ENCODE measurements at regions of chr10 and their contacts with region 1.

Region 1: GRCh38 chr10:97210543-97210961 is 24.8 kb upstream of the SLIT1 start:
- DNase-seq: peak; percentile 48 to 72 (median 53)
- H3K4me3 ChIP-seq: no peak overlapping the region
- H3K4me3 Mint-ChIP-seq: no peak overlapping the region
- H3K27ac ChIP-seq: no peak overlapping the region
- H3K27ac Mint-ChIP-seq: no peak overlapping the region
- H3K4me1 ChIP-seq: no peaks in the 10 kb centered on the region
- H3K4me1 Mint-ChIP-seq: no peaks in the 10 kb centered on the region
- H3K27me3 ChIP-seq: no peaks in the 10 kb centered on the region
- H3K27me3 Mint-ChIP-seq: peaks cover 0 to 2% of the 10 kb centered on the region in 2 donors

Region 2: DNA sequence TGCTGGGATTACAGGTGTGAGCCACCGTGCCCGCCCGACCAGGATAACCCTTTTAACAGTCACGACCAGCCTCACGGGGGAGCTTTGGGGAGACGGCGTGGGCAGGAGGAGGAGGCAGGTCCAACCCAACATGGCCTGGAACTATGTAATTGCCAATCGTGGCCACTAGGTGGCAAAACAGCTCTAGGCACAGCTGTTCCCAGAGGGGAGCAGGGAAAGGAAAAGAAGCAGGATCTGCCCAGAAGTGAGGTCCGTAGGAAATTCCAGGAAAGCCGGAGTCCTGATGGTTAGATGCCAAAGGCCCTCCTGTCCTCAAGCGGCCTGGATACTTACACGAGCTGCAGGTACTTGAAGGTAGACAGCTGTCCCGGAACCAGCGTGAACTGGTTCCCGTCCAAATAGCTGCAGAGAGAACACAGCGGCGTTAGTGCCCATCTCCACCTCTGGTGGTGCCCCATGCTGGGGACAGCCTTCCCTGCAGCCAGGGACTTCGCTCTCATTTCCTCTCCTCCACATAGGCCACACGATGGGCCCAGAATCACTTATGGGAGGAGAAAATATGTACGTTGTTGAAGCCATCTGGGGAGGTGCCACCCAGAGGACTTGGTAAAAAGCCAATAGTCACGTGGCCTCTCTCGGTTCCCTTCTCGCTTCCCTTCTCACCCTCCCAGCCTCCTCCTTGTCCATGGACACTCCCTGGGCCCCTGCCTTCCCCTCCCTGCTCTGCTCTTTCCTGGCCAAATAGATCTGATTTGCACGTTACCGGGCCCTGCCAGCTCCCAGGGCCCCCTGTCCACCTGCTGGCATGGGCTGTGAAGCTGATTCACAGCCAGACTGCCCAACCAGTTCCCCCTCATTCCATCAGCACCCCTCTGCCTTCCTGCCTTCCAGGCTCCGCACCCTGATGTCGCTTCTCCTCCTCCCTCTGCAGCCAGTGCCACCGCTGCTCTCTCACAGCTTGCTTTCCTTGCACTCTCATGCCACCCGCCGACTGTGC is 172.9 kb before region 1 on chr10:
- CTCF ChIA-PET with region 1: interaction called, 35 read pairs
- POLR2A ChIA-PET with region 1: no interaction called
- DNase-seq: peak; percentile 42 to 75 (median 50)
- H3K4me3 ChIP-seq: peak overlapping the region; percentile 68
- H3K4me3 Mint-ChIP-seq: peak overlapping the region; percentile 38 to 88 (median 77)
- H3K27ac ChIP-seq: no peak overlapping the region
- H3K27ac Mint-ChIP-seq: peak overlapping the region in 4 of 8 donors; percentile 32 to 90 (median 63)
- H3K4me1 ChIP-seq: no peaks in the 10 kb centered on the region
- H3K4me1 Mint-ChIP-seq: peaks cover 7 to 17% (median 10%) of the 10 kb centered on the region in 3 donors
- H3K27me3 ChIP-seq: no peaks in the 10 kb centered on the region
- H3K27me3 Mint-ChIP-seq: peaks cover 6 to 14% of the 10 kb centered on the region in 2 donors

Region 3: DNA sequence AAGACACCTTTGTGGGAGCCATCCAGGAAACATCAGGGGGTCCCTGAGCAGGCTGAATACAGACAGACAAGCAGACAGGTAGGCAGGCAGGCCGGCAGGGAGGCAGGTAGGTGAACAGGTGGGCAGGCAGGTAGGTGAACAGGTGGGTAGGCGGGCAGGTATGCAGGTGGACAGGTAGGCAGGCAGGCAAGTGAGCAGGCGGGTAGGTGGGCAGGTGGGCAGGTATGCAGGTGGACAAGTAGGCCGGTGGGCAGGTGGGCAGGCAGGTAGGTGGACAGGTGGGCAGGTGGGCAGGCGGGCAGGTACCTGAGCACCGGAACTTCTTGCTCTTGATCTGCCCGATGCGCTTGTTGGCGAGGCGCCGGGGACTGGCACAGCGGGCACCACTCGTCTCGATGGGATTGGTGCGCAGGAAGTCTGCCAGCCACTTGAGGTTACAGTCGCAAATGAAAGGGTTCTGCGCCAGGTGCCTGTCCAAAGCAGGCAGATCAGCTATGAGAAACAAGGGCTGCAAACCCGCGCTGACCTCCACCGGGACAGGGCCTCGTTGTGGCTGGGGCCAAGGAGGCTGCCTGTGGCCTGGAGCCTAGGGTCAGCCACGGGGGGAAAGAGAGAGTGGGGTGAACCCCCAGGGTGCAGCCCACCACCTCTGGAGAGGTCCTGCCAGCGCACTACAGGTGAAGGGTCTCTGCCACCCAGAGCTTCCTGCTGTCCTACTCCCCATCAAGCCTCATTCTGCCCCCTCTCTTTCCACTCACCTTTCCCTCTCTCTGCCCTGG is 161.7 kb before region 1 on chr10:
- CTCF ChIA-PET with region 1: no interaction called
- POLR2A ChIA-PET with region 1: no interaction called
- DNase-seq: no peak
- H3K4me3 ChIP-seq: no peak overlapping the region
- H3K4me3 Mint-ChIP-seq: no peak overlapping the region
- H3K27ac ChIP-seq: no peak overlapping the region
- H3K27ac Mint-ChIP-seq: peak overlapping the region in 1 of 8 donors; percentile 33
- H3K4me1 ChIP-seq: no peaks in the 10 kb centered on the region
- H3K4me1 Mint-ChIP-seq: no peaks in the 10 kb centered on the region
- H3K27me3 ChIP-seq: no peaks in the 10 kb centered on the region
- H3K27me3 Mint-ChIP-seq: peaks cover 1 to 37% of the 10 kb centered on the region in 2 donors

Region 4: DNA sequence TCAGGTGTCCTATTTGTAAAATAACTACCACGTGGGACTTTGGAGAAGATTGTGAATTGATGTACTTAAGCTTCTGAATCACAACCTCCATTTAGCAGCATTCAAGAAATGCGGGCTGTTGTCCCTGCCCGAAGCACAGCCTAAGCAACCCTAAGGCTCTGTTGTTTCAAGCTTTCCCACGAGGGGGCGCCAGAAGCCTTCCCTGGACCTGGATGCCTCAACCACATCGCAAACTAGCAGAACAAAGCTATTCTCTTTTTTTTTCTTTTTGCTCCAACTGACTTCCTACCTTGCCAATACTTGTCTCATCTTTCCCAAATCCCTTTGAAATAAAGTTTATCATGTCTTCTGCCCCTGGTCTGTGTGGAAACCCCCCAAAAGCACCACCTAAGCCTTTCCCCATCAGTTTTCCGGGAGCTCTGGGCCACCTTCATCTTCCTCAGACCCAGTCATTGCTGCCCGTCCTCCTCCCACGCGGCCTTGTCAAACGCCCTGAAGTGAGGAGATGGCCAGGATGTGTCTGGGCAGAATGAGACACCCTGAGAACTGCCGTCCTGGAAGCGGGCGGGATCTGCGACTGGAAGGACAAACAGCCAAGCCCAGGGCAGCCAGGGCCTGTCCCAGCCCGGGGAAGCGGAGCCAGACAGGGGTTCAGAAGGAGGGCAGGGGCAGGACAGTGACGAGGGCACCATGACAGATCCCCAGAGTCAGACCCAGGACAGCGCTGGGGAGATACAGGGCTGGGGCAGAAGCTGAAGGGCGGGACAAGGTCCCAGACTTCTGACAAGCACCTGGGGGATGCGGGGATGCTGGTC is 137.5 kb before region 1 on chr10:
- CTCF ChIA-PET with region 1: interaction called, 209 read pairs
- POLR2A ChIA-PET with region 1: no interaction called
- DNase-seq: peak; percentile 65 to 85 (median 72)
- H3K4me3 ChIP-seq: no peak overlapping the region
- H3K4me3 Mint-ChIP-seq: no peak overlapping the region
- H3K27ac ChIP-seq: no peak overlapping the region
- H3K27ac Mint-ChIP-seq: no peak overlapping the region
- H3K4me1 ChIP-seq: no peaks in the 10 kb centered on the region
- H3K4me1 Mint-ChIP-seq: peaks cover 5 to 12% (median 8%) of the 10 kb centered on the region in 3 donors
- H3K27me3 ChIP-seq: peaks cover 4% of the 10 kb centered on the region
- H3K27me3 Mint-ChIP-seq: peaks cover 9 to 41% of the 10 kb centered on the region in 2 donors

Region 5: DNA sequence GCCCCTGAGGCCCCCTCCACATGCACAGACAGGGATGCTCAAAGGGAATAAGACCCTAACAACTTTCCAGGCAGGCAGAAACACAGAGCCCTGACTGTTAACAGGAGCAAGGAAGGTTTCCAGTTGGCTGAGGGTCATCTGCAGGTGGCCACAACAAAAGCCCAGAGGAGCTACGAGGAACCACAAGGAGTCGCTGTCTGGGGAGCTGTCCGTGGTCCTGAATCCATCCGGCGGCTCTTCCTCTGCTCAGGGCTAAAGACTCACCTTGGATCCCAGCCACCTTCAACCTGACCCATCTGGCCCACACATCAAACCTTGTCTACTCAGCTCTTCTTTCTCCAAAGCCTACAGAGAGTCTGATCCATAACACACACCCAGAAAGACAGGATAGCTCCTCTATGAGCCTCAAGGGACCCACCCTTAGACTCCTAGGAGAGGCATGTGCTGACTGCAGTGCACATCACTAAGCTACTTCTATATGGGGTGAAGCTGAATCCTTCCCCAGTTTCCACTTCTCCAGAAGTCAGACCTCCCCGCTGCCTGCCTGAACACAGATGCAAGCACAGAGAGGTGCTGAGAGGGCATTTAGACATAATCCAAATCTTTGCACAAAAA is 128.8 kb before region 1 on chr10:
- CTCF ChIA-PET with region 1: interaction called, 209 read pairs
- POLR2A ChIA-PET with region 1: no interaction called
- DNase-seq: peak; percentile 31 to 72 (median 48)
- H3K4me3 ChIP-seq: no peak overlapping the region
- H3K4me3 Mint-ChIP-seq: no peak overlapping the region
- H3K27ac ChIP-seq: no peak overlapping the region
- H3K27ac Mint-ChIP-seq: peak overlapping the region in 1 of 8 donors; percentile 40
- H3K4me1 ChIP-seq: no peaks in the 10 kb centered on the region
- H3K4me1 Mint-ChIP-seq: no peaks in the 10 kb centered on the region
- H3K27me3 ChIP-seq: no peaks in the 10 kb centered on the region
- H3K27me3 Mint-ChIP-seq: peaks cover 10 to 55% of the 10 kb centered on the region in 2 donors

Region 6: DNA sequence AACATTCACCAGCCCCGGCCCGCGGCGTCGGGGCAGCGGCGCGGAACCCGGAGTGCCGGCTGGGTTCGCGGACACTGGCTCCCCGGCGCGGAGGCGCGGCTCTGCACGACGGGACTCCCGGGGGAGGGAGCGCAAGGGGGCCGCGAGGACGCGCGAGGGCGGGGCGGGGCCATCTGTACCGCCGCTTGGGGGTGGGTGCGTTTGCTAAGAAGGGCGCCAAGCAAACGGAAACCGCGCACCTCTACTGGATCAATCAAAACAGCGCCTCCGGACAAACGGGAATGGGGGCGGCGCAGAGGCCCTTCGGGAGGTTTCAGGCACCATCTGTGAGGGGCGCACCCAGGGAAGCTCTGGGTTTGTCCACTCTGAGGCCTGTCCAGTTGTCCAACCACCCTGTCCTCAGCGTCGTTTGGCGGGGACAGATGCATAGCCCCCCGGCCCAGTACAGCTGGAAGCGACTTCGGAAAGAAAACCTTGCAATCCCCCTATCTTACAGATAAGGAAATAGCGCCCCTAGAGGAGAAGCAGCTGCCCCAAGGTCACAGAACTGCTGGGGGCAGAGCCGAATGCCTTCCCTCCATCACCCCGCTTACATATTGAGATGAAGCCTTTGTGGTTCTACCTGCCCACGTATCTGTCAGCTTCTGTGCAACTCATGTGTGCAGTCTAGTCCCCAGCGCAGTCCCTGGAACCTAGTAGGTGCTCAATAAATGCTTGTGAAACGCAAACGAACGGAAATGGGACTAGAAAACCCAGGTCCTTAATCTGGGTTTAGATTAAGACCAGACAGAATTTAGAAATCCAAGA is 14.1 kb before region 1 on chr10:
- CTCF ChIA-PET with region 1: interaction called, 97 read pairs
- POLR2A ChIA-PET with region 1: no interaction called
- DNase-seq: peak; percentile 42 to 75 (median 64)
- H3K4me3 ChIP-seq: peak overlapping the region; percentile 68
- H3K4me3 Mint-ChIP-seq: peak overlapping the region; percentile 81 to 94 (median 85)
- H3K27ac ChIP-seq: no peak overlapping the region
- H3K27ac Mint-ChIP-seq: peak overlapping the region in 2 of 8 donors; percentile 4 to 81
- H3K4me1 ChIP-seq: peaks cover 5% of the 10 kb centered on the region
- H3K4me1 Mint-ChIP-seq: peaks cover 10 to 18% (median 13%) of the 10 kb centered on the region in 3 donors
- H3K27me3 ChIP-seq: peaks cover 3% of the 10 kb centered on the region
- H3K27me3 Mint-ChIP-seq: peaks cover 6 to 39% of the 10 kb centered on the region in 2 donors

Region 7: DNA sequence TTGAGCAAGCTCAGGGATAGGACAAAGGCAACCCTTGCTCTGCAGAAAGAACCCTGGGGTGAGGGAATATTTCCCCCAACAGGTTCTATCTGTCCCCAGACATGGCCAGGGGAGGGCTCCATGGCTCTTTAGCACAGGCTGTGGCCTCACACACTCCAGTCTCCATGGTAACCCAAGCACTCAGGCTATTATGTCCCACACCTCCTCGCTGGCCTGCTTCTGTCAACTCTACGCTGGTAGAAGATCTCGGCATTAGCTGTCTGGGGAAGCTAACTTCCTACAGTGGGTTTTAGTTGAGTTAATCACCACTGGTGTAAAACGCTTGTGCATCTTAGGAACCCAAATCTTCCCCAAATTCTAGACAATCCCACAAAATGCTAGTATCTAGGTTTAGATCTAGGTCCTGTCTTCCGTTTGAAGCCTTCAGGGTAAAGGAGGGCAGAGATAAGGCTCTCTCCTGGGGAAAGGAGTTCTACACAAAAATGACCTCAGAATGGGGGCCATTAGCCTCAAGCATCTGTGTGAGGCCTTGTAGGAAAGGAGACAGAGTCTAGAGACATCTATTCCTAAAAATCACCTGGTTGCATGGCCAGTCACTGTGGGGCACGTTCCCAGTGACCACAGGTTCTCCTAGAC is 11.9 kb after region 1 on chr10:
- CTCF ChIA-PET with region 1: interaction called, 33 read pairs
- POLR2A ChIA-PET with region 1: no interaction called
- DNase-seq: no peak
- H3K4me3 ChIP-seq: no peak overlapping the region
- H3K4me3 Mint-ChIP-seq: no peak overlapping the region
- H3K27ac ChIP-seq: no peak overlapping the region
- H3K27ac Mint-ChIP-seq: peak overlapping the region in 1 of 8 donors; percentile 43
- H3K4me1 ChIP-seq: no peaks in the 10 kb centered on the region
- H3K4me1 Mint-ChIP-seq: peaks cover 4 to 11% (median 5%) of the 10 kb centered on the region in 3 donors
- H3K27me3 ChIP-seq: no peaks in the 10 kb centered on the region
- H3K27me3 Mint-ChIP-seq: no peaks in the 10 kb centered on the region

Measured in CD8-positive, alpha-beta memory T cell (primary cell).